Activated CD8-positive, alpha-beta memory T cell treated with anti-CD3 and anti-CD28 coated beads, Interleukin-2, amount 10 ng/mL, durations not matched to agents 7 days and 5 days (primary cell): ENCODE measurements at regions of chr6 and their contacts with region 1.

Region 1: DNA sequence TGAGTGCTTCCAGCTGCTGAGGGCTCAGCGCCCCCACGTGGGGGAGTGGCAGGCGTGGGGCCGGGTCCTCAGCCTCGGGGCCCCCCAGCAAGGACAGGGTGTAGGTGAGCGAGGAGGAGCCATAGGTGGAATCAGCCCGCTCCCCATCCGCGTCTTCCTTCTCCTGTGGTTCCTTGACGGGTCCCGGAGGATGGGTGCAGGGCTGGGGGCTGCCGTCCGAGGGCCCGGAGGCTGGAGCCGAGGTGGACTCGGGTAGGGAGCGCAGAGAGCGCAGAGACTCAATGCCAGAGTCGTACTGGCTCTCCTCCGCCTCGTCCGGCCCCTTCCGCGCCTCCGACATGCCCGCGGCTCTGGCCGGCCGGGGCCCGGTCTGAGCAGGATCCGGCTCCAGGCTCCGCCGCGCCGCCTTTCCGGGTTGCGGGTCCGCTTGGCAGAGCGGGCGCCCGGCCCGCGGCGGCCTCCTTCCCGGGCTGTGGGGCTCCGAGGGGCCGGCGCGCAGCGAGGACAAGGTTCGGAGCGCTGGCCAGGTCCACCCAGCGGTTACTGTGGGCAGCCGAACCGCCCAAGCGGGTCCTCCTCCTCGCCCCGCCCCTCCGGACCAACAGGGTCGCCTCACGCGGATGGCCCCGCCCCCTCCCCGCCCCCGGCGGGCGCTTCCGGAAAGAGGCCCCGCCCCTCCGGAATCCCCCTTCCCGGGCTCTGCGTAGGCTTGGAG is at the start of gene NFKBIE:
- DNase-seq: peak; percentile 94
- ATAC-seq: peak; percentile 74
- H3K4me3 Mint-ChIP-seq: peak within 1 kb of the TSS; percentile 97
- H3K27ac Mint-ChIP-seq: peak within 1 kb of the TSS; percentile 96
- H3K4me1 Mint-ChIP-seq: peaks cover 60% of the 10 kb centered on the region
- H3K27me3 Mint-ChIP-seq: peaks cover 18% of the 10 kb centered on the region
- total RNA-seq, gene NFKBIE: 24.5 to 37.7 TPM

Region 2: DNA sequence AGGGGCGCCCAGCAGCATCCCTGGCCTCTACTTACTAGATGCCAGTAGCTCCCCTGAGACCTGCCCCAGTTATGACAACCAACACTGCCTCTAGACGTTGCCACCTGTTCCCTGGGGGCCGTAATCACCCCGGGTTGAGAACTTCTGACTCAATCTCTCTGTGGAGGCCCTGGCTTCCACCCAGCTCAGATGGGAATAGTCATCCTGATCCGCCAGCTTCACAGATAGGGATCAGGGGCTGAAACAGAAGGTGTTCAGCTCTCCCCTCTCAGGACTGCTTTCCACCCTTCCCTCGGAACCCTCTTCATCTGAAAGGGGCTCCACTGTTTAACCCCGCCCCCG is 103.2 kb before region 1 on chr6:
- CTCF ChIA-PET with region 1: no interaction called
- DNase-seq: no peak
- ATAC-seq: no peak
- H3K4me3 Mint-ChIP-seq: no peak overlapping the region
- H3K27ac Mint-ChIP-seq: no peak overlapping the region
- H3K4me1 Mint-ChIP-seq: peaks cover 6% of the 10 kb centered on the region
- H3K27me3 Mint-ChIP-seq: peaks cover 34% of the 10 kb centered on the region

Region 3: DNA sequence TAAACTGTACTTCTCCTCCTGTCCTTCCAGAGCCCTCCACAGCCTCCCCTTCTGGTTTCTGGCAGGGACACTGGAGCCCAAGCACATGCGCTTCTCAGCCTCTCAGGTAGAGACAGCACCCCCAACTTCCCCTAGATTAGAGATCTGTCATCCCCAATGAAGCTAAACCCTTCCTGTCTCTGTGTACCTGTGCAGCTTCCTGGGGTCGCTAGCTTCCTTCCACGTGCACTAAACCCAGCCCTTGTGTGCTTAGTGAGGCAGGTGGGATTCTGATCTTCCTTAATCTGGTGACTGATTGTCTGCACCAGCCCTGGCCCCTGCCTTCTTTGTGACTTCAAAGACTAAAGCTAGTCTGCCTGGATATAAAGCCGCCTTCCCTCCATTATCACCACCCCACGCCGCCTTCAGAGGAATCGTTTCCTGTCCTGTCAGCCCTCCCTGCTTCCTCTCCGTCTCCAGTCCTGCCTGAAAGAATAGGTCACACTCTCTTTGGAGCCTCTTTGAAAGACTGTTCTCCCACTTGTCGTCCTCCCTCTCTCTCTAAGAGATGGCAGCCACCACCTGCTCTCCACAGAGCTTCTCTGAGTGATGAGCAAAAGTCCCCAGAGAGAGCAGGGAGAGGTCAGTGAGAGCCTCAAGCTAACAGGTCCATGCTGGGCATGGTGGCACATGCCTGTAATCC is 79.1 kb before region 1 on chr6:
- CTCF ChIA-PET with region 1: no interaction called
- DNase-seq: no peak
- ATAC-seq: peak; percentile 27
- H3K4me3 Mint-ChIP-seq: no peak overlapping the region
- H3K27ac Mint-ChIP-seq: no peak overlapping the region
- H3K4me1 Mint-ChIP-seq: peaks cover 6% of the 10 kb centered on the region
- H3K27me3 Mint-ChIP-seq: peaks cover 7% of the 10 kb centered on the region

Region 4: DNA sequence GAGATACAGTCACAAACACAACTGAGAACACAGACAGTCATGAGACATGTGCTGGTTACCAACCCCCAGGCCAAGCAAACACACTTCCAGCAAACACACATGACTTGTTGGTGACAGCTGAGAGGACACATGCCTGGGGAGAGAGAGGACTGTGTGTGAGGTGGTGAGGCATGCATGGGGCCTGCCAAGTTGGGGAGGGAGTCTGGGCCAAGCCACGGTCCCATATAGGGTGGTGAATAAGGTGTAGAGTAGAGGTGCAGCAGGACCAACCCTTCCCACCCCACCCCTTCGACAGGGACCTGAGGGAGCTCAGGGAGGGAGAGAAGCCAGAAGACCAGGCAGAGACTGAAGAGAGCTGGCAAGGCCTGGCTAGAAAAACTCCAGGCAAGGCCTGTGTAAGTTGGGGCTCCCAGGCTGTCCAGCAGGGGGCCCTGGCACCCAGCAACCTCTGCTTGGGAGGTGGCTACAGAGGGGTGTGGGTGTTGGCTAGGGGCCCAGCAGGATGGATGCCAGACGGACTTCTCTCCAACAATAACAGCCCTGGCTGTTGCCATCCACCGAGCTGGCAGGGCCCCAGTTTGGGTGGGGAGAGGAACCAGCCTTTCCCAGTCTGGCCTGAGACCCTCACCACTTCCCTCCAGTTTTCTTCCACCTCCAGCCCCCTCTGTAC is 43.7 kb before region 1 on chr6:
- CTCF ChIA-PET with region 1: interaction called, 11 read pairs
- DNase-seq: peak; percentile 85
- ATAC-seq: peak; percentile 64
- H3K4me3 Mint-ChIP-seq: no peak overlapping the region
- H3K27ac Mint-ChIP-seq: peak overlapping the region; percentile 3
- H3K4me1 Mint-ChIP-seq: peaks cover 37% of the 10 kb centered on the region
- H3K27me3 Mint-ChIP-seq: peaks cover 11% of the 10 kb centered on the region

Region 5: GRCh38 chr6:44278774-44279697 is 13.9 kb after region 1 on chr6:
- CTCF ChIA-PET with region 1: interaction called, 11 read pairs
- DNase-seq: no peak
- ATAC-seq: no peak
- H3K4me3 Mint-ChIP-seq: no peak overlapping the region
- H3K27ac Mint-ChIP-seq: no peak overlapping the region
- H3K4me1 Mint-ChIP-seq: no peaks in the 10 kb centered on the region
- H3K27me3 Mint-ChIP-seq: peaks cover 52% of the 10 kb centered on the region

Region 6: GRCh38 chr6:44304282-44305199 is 39.4 kb after region 1 on chr6:
- CTCF ChIA-PET with region 1: interaction called, 94 read pairs
- DNase-seq: peak; percentile 48
- ATAC-seq: peak; percentile 69
- H3K4me3 Mint-ChIP-seq: no peak overlapping the region
- H3K27ac Mint-ChIP-seq: no peak overlapping the region
- H3K4me1 Mint-ChIP-seq: peaks cover 5% of the 10 kb centered on the region
- H3K27me3 Mint-ChIP-seq: no peaks in the 10 kb centered on the region

Region 7: DNA sequence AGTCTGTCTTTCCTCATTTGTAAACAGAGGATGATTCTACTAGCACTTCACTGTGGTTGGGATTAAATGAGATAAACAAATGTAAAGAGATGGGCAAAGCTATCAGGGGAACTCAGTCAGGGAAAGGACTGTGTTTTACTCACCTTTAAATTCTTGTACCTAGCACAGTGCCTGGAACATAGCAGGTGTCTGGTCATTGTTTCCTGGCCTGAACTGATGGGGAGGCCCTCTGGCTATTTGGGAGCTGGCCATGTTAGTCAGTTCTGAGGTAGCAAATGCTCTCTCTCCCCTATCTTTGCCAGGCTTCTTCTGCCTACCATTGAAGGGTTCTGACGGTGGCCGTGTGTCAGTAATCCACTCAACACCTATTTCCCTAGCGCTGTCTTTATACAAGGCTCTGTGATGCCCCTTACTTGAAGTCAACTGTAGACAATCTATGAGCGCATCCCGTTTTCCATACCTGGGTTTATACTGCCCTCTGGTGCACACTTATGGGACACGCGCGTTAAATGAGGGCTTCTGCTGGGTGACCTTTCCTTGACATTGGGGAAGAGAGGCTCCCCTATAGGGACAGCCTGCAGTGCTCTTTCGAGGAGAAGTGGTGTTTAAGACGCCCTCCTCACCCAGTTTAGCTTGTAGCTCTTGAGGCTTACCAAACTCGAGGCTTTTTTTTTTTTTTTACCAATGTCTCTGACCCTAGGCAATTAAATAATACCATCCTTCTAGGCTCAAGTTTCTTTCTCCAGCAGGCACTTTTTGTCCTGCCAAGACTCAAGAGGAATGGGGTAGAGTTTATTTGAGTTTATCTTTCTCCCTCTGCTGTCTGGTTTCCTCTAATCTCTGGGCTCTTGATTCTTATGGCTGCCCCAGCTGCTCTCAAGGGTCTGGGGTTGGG is 73.3 kb after region 1 on chr6:
- CTCF ChIA-PET with region 1: interaction called, 91 read pairs
- DNase-seq: peak; percentile 79
- ATAC-seq: peak; percentile 88
- H3K4me3 Mint-ChIP-seq: no peak overlapping the region
- H3K27ac Mint-ChIP-seq: no peak overlapping the region
- H3K4me1 Mint-ChIP-seq: peaks cover 4% of the 10 kb centered on the region
- H3K27me3 Mint-ChIP-seq: peaks cover 38% of the 10 kb centered on the region